ENCODE measurements at regions of chr2 and their contacts with region 1.

Region 1: DNA sequence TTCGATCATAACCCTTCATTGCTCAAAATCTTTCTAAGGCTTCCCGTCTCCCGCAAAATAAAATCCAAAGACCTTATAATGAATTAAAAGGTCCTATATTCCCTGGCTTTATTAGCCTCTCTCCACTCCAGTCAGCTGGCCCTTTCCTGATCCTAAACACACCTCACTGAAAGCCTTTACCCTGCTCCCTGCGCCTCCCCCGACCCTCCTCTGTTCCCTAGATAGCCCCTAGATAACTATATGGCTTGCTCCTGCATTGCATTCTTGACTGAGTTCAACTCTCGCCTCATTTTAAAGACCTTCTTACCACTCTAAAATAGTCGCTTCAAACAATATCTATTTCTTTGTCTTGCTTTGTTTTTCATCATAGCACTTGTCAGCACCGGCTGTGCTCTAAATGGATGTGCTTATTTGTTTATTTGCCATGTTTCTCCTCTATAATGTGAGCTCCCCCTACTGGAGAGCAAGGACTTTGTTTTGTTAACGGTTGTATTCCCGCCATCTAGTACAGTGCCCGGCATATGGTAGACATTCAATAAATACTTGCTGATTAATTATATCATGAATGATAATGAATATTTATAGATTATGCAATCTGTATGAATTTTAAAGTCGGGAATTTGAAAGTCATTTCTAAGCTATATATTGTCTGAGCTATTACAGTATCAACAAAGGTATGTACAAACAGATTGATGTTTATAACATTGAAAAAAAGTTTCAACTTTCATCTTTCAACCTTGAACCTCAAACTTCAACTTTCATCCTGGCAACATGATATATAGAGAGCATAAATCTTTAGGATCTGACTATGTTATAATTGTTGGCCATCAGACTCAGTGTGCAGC is 32.4 kb upstream of the VIT start:
- DNase-seq: peak; percentile 81
- H3K4me3 Mint-ChIP-seq: no peak overlapping the region
- H3K27ac Mint-ChIP-seq: no peak overlapping the region
- H3K4me1 Mint-ChIP-seq: no peaks in the 10 kb centered on the region
- H3K27me3 Mint-ChIP-seq: no peaks in the 10 kb centered on the region
- CTCF ChIP-seq: peak; percentile 64

Region 2: GRCh38 chr2:36355151-36355889 is 308.8 kb before region 1 on chr2 and contains the start of gene CRIM1:
- CTCF ChIA-PET with region 1: interaction called, 33 read pairs
- POLR2A ChIA-PET with region 1: no interaction called
- intact Hi-C with region 1: loop called (anchors 1 kb)
- DNase-seq: peak; percentile 86
- H3K4me3 Mint-ChIP-seq: peak within 1 kb of the TSS; percentile 95
- H3K27ac Mint-ChIP-seq: peak within 1 kb of the TSS; percentile 97
- H3K4me1 Mint-ChIP-seq: peaks cover 28% of the 10 kb centered on the region
- H3K27me3 Mint-ChIP-seq: no peaks in the 10 kb centered on the region
- CTCF ChIP-seq: no peak
- total RNA-seq, gene CRIM1: 119 and 185 TPM in 2 replicates

Region 3: DNA sequence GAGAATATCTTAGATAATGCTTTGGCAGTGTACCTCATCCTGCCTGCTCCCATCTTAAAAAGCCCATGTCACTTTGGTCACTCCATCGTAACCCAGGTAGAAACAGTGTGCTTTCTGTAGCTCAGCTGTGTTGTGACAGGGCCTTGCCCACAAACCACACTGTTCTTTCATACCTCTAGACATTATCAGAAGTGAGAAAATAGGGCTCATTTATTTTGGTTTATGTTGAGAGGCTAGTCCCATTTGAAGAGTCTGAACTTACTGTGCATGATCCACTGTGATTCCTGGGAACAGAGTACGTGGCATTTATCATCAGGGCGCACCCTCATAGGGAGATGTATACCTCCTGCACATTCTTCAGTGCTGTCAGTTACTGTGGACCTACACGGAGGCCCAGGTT is 135.8 kb before region 1 on chr2:
- CTCF ChIA-PET with region 1: interaction called, 12 read pairs
- POLR2A ChIA-PET with region 1: no interaction called
- intact Hi-C with region 1: no loop called
- DNase-seq: no peak
- H3K4me3 Mint-ChIP-seq: no peak overlapping the region
- H3K27ac Mint-ChIP-seq: no peak overlapping the region
- H3K4me1 Mint-ChIP-seq: no peaks in the 10 kb centered on the region
- H3K27me3 Mint-ChIP-seq: no peaks in the 10 kb centered on the region
- CTCF ChIP-seq: no peak

Region 4: GRCh38 chr2:36544638-36545338 is 119.3 kb before region 1 on chr2:
- CTCF ChIA-PET with region 1: interaction called, 20 read pairs
- POLR2A ChIA-PET with region 1: interaction called, 4 read pairs
- intact Hi-C with region 1: loop called (anchors 5 kb)
- DNase-seq: no peak
- H3K4me3 Mint-ChIP-seq: no peak overlapping the region
- H3K27ac Mint-ChIP-seq: peak overlapping the region; percentile 46
- H3K4me1 Mint-ChIP-seq: no peaks in the 10 kb centered on the region
- H3K27me3 Mint-ChIP-seq: no peaks in the 10 kb centered on the region
- CTCF ChIP-seq: peak; percentile 14

Region 5: GRCh38 chr2:36561237-36561944 is 102.7 kb before region 1 on chr2:
- CTCF ChIA-PET with region 1: interaction called, 12 read pairs
- POLR2A ChIA-PET with region 1: interaction called, 4 read pairs
- intact Hi-C with region 1: no loop called
- DNase-seq: peak; percentile 83
- H3K4me3 Mint-ChIP-seq: peak overlapping the region; percentile 46
- H3K27ac Mint-ChIP-seq: peak overlapping the region; percentile 98
- H3K4me1 Mint-ChIP-seq: peaks cover 45% of the 10 kb centered on the region
- H3K27me3 Mint-ChIP-seq: no peaks in the 10 kb centered on the region
- CTCF ChIP-seq: no peak

Region 6: DNA sequence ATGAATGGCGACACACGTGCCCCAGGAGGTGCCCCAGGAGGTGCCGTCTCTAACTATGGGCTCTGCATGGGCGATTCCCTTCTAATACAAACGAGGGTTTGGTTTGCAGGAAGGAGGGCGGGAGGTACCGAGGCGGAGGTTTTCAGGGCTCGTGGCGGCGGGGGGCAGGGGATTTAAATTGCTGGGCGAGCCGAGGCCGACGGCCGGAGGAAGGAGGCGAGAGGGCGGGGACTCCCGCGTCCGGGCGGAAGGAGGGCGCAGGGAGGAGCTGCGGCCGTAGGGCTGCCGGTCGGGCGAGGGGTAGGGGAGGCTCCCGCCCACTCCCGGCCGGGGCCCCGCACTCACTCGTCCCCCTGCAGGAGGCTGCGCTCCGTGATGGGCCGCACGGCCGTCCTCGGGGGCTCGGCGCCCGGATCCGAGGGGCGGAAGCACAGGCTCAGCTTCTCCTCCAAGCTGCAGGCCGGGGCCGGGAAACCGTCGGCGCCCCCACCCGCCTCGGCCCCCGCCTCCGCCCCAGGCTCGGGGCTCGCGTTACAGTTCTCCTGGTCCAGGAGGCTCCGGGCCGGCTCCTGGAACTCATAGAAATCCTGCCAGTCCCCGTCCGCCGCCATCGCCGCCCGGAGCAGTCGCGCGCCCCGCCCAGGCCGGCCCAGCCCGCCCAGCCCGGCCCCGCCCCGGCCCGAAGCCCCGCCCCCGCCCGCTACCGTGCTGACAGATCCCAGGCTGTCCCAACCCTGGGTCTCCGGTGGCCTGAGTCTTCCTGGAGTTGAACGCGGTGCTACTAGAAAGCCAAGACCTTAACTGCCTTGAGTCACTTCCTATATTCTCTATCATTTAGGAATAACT is 66.3 kb before region 1 on chr2 and contains the start of gene FEZ2:
- CTCF ChIA-PET with region 1: no interaction called
- POLR2A ChIA-PET with region 1: no interaction called
- intact Hi-C with region 1: loop called (anchors 5 kb)
- DNase-seq: peak; percentile 72
- H3K4me3 Mint-ChIP-seq: peak within 1 kb of the TSS; percentile 97
- H3K27ac Mint-ChIP-seq: no peak within 1 kb of the TSS
- H3K4me1 Mint-ChIP-seq: peaks cover 29% of the 10 kb centered on the region
- H3K27me3 Mint-ChIP-seq: no peaks in the 10 kb centered on the region
- CTCF ChIP-seq: no peak
- total RNA-seq, gene FEZ2: 31.9 and 43.4 TPM in 2 replicates

Region 7: GRCh38 chr2:36680012-36680411 is 15.9 kb after region 1 on chr2:
- CTCF ChIA-PET with region 1: interaction called, 16 read pairs
- POLR2A ChIA-PET with region 1: no interaction called
- intact Hi-C with region 1: no loop called
- DNase-seq: no peak
- H3K4me3 Mint-ChIP-seq: no peak overlapping the region
- H3K27ac Mint-ChIP-seq: no peak overlapping the region
- H3K4me1 Mint-ChIP-seq: no peaks in the 10 kb centered on the region
- H3K27me3 Mint-ChIP-seq: peaks cover 10% of the 10 kb centered on the region
- CTCF ChIP-seq: no peak

Measured in MCF 10A (cell line).